Mammary epithelial cell (primary cell): ENCODE measurements at regions of chr17 and their contacts with region 1.

Region 1: GRCh38 chr17:27245230-27245696 is 48.7 kb upstream of the WSB1 start:
- DNase-seq: peak; percentile 76
- H3K4me3 ChIP-seq: peak overlapping the region; percentile 12 to 26 (median 24)
- H3K27ac ChIP-seq: peak overlapping the region; percentile 71
- H3K4me1 ChIP-seq: peaks cover 47% of the 10 kb centered on the region
- H3K27me3 ChIP-seq: no peaks in the 10 kb centered on the region
- CTCF ChIP-seq: peak; percentile 66 to 77

Region 2: GRCh38 chr17:27293898-27294688 is 48.8 kb after region 1 on chr17 and contains the start of gene WSB1:
- CTCF ChIA-PET with region 1: interaction called, 4 read pairs
- dilution Hi-C with region 1: no loop called
- in situ Hi-C with region 1: loop called in 1 of 2 experiments (anchors 10 kb)
- intact Hi-C with region 1: loop called (anchors 2 kb)
- DNase-seq: peak; percentile 84
- H3K4me3 ChIP-seq: peak within 1 kb of the TSS; percentile 75 to 97 (median 94)
- H3K27ac ChIP-seq: peak within 1 kb of the TSS; percentile 93
- H3K4me1 ChIP-seq: peaks cover 16% of the 10 kb centered on the region
- H3K27me3 ChIP-seq: no peaks in the 10 kb centered on the region
- CTCF ChIP-seq: peak in 1 of 2 donors; percentile 3
- total RNA-seq, gene WSB1: 93.0 to 119 TPM

Region 3: DNA sequence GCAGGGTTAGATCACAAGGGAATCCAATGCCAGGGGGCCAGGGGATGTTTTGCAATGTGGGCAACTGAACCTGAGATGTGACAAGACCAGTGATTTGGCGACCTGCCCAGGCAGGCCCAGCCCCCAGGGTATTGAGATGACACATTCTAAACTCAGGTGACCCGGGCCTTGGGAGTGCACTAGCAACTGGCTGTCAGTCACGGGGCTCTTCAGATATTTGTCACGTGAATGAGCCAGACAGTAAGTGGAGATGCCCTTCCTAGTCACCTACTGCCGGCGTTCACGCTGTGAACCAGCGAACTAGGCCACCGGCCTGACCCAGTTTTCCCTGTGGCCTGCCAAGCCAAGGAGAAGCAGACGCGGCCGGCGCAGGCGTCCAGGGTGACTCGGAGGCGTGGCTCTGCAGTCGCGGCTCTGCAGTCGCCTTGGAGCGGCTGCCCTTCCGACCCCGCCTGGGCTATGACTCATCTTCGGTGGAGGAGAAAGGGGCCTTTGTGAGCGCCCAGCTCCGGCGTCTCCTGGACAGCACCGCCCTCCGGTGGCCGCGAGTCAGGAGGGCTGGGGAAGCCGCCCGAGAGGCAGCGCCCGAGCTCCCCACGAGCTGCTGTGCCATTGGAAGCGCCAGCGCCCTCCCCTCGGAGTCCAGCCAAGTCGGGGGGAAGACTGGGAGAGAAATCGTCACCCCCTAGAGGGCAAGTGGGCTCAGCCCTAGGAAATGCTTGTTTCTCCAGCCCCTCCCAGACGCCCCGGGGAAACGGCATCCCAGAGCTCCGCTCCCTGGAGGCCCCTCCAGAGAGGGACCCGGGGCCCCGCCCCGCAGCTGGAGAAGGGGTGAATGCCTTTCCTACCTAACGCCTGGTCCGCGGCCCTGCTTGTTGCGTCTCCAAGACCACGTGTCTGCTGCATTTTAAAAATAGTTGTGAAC is 87.5 kb after region 1 on chr17:
- CTCF ChIA-PET with region 1: interaction called, 6 read pairs
- dilution Hi-C with region 1: no loop called
- in situ Hi-C with region 1: loop called (anchors 5 kb)
- intact Hi-C with region 1: loop called (anchors 1 kb)
- DNase-seq: peak; percentile 98
- H3K4me3 ChIP-seq: peak overlapping the region; percentile 51 to 62 (median 57)
- H3K27ac ChIP-seq: peak overlapping the region; percentile 89
- H3K4me1 ChIP-seq: peaks cover 30% of the 10 kb centered on the region
- H3K27me3 ChIP-seq: no peaks in the 10 kb centered on the region
- CTCF ChIP-seq: peak; percentile 65 to 91

Region 4: DNA sequence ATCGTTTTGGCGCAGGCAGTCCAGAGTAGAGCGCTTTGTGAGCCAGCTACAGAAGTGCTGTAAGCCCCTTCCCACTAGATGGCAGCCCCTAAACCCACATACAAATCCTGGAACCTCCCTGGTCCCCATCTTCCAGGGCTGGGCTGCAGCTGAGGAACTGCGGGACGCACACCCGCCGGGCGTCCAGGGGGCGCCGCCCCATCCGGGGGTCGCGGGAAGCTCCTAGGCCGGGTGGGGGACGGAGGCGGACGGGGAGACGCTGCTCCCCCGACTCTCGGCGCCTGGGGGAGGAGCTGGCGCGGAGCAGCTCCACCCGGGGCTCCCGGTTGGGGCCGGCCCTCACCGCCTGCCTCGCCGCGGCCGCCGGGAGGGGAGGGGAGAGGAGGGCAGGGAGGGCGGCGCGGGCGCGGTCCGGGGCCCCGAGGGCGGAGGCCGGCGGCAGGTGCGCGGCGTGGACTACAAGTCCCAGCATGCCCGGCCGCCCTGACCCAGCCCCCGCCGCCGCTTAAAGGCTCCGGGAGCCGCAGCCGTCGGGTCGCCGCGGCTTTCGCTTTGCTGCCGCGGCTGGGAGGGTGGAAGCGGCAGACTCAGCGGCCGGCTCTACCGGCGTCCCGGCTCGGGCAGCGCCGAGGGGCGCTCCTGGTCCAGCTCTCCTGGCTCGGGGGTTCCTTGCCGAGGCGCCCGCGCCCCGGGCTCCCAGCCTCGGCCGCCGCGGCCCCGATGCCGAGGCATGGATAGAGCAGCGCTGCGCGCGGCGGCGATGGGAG is 210.8 kb after region 1 on chr17 and contains the start of gene KSR1:
- CTCF ChIA-PET with region 1: no interaction called
- dilution Hi-C with region 1: no loop called
- in situ Hi-C with region 1: no loop called
- intact Hi-C with region 1: loop called (anchors 10 kb)
- DNase-seq: peak; percentile 47
- H3K4me3 ChIP-seq: peak within 1 kb of the TSS; percentile 49 to 62 (median 52)
- H3K27ac ChIP-seq: no peak within 1 kb of the TSS
- H3K4me1 ChIP-seq: peaks cover 11% of the 10 kb centered on the region
- H3K27me3 ChIP-seq: peaks cover 9% of the 10 kb centered on the region
- CTCF ChIP-seq: peak in 1 of 2 donors; percentile 29
- total RNA-seq, gene KSR1: 1.6 to 1.7 TPM

Region 5: GRCh38 chr17:27578718-27579085 is 333.4 kb after region 1 on chr17:
- CTCF ChIA-PET with region 1: no interaction called
- dilution Hi-C with region 1: loop called (anchors 25 kb)
- in situ Hi-C with region 1: loop called in 1 of 2 experiments (anchors 25 kb)
- intact Hi-C with region 1: no loop called
- DNase-seq: peak; percentile 24
- H3K4me3 ChIP-seq: no peak overlapping the region
- H3K27ac ChIP-seq: no peak overlapping the region
- H3K4me1 ChIP-seq: peaks cover 10% of the 10 kb centered on the region
- H3K27me3 ChIP-seq: no peaks in the 10 kb centered on the region
- CTCF ChIP-seq: peak in 1 of 2 donors; percentile 5

Region 6: DNA sequence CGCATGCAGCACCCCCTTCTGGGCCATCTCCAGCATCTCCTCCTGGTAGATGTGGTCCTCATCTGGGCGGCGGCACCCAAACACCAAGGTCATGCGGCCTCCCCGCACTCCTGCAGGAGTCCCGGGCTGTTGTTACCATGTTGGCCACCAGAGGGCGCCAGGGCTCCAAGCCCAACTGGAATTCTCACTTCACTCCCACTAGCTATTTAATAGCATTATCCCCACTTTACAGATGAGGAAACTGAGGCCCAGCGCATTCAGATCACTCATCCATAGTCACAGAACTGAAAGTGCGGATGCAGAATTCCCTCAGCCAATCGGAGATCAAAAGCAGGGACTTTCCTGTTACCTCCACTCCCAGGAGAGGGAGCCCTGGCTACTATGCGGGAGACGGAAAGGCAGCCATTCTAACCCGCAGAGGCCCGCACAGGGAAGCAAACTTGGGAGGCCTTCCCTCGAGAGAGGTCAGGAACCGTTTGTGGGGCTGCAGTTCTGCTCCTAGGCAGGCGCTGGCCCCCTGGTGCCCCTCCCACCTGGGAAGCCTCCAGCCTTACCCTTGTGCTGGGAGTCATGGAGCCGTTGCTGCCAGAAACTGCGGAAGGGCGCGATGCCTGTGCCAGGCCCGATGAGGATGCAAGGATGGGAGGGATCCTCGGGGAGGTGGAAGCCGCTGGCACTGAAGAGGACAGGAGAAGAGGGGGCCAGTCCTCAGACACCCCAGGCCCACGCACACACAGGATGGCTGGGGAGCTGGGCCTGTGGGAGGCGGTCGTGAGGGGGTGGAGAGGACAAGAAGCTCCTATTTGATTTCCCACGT is 515.0 kb after region 1 on chr17:
- CTCF ChIA-PET with region 1: no interaction called
- dilution Hi-C with region 1: no loop called
- in situ Hi-C with region 1: no loop called
- intact Hi-C with region 1: loop called (anchors 10 kb)
- DNase-seq: peak; percentile 19
- H3K4me3 ChIP-seq: no peak overlapping the region
- H3K27ac ChIP-seq: no peak overlapping the region
- H3K4me1 ChIP-seq: no peaks in the 10 kb centered on the region
- H3K27me3 ChIP-seq: no peaks in the 10 kb centered on the region
- CTCF ChIP-seq: peak; percentile 60 to 84